Thyroid gland (tissue), 4 donors: ENCODE measurements at regions of chr11 and their contacts with region 1.

Region 1: DNA sequence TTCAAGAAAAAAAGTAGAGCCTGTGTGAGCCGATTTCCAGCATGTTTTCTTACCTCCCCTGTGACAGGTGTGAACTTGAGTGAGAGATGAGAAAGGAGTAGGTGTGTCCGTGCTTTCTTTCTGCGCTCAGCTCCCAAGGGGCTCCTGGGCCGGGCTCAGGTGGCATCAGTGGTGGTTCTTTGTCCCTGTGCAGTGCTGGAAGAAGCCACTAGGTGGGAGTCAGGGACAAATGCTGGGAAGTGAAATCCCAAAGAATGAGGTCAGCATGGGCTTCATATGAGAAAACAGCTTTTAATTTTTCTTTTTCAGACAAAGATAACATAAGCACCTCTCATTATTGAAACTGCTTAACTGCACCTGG is 57.8 kb downstream of the PPFIBP2 start:
- DNase-seq: peak; percentile 89
- H3K4me3 ChIP-seq: no peak overlapping the region
- H3K27ac ChIP-seq: peak overlapping the region; percentile 91 to 97 (median 92)
- H3K4me1 ChIP-seq: peaks cover 40 to 64% of the 10 kb centered on the region in 2 donors
- H3K27me3 ChIP-seq: no peaks in the 10 kb centered on the region
- CTCF ChIP-seq: peak; percentile 91 to 98 (median 95)
- POLR2A ChIP-seq: no peak

Region 2: DNA sequence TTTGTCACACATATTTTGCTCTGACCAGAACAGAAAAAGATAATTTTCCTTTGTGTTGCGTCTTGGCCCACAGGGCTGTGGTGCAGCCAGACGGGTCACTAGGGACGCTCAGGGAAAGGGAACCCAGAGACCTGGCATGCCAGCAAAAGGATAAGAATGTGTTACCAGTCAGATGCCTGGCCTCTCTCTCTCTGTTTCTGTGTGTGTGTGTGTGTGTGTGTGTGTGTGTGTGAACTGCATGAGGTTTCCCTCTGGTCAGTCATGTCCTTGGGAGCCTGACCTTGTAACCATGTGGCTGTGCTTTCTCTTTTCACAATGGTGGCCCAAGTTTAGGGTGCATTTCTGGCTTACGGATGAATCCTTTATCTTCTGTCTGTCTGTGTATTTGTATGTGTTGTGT is 1286.6 kb before region 1 on chr11:
- intact Hi-C with region 1: no loop called
- DNase-seq: no peak
- H3K4me3 ChIP-seq: no peak overlapping the region
- H3K27ac ChIP-seq: no peak overlapping the region
- H3K4me1 ChIP-seq: no peaks in the 10 kb centered on the region
- H3K27me3 ChIP-seq: no peaks in the 10 kb centered on the region
- CTCF ChIP-seq: no peak
- POLR2A ChIP-seq: no peak

Region 3: DNA sequence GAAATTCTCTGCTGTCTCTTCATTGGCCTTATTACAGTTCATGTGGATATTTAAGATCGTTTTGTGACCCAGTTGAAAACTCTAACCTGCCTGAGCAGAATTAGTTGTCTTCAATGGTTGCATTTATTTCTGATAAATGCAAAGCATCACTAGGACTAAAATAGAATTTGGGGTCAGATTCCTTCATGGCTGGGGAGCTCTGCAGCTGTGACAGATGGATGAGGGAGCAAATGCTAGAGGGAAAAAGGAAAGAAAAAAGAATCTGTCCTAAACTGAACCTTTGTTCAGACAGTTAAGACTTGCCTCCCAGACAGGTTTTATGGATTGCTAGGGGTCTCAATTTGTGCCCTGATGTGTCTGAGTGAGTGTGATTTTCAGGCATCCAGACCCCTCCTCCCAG is 207.0 kb before region 1 on chr11:
- intact Hi-C with region 1: no loop called
- DNase-seq: no peak
- H3K4me3 ChIP-seq: no peak overlapping the region
- H3K27ac ChIP-seq: no peak overlapping the region
- H3K4me1 ChIP-seq: no peaks in the 10 kb centered on the region
- H3K27me3 ChIP-seq: no peaks in the 10 kb centered on the region
- CTCF ChIP-seq: no peak
- POLR2A ChIP-seq: no peak

Region 4: DNA sequence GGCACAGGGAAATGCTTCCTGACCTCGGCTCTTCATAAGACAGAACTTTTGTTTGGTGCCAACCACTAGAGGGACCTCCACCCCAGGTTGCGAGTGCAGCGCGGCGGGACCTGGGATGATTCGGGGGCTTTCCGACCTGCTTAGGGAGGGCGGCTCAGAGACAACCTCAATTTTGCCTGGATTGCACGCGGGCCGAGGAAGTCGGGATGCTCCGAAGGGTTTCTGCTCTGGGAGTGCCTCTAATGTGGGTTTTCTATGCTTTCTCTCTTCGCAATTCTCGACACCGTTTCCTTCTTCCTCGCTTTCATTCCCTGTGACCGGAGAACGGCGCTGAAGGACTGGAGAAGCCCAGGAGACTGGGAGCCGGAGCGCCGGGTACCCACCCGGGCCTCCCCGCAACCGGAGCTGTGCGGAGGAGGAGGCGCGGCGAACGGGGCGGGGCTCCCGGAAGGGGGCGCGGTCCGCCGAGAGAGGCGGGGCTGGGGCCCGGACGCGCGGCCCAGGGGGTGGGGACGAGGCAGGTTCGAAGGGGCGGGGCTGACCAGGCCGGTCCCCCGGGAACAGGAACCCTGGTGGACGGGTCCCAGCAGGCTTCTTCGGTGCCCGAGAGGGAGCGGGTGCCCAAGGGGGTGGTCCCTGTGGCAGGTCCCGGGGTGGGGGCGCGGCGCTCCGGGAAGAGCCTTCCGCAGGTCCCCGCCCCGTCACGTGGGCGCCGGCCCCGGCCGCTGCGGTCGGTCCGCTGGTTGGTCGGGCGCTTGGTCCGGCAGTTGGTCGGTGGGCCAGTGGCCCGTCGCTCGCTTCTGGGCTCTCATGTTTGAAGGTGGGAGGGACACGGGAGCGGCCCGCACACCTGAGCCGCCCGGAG is 58.2 kb before region 1 on chr11 and contains the start of gene PPFIBP2:
- intact Hi-C with region 1: loop called (anchors 10 kb)
- DNase-seq: peak; percentile 93 to 96
- H3K4me3 ChIP-seq: peak within 1 kb of the TSS; percentile 31 to 93 (median 82)
- H3K27ac ChIP-seq: peak within 1 kb of the TSS; percentile 97 to 100 (median 98)
- H3K4me1 ChIP-seq: peaks cover 34 to 37% of the 10 kb centered on the region in 2 donors
- H3K27me3 ChIP-seq: no peaks in the 10 kb centered on the region
- CTCF ChIP-seq: peak in 5 of 6 experiments; percentile 55 to 78 (median 65)
- POLR2A ChIP-seq: peak; percentile 59 to 95
- total RNA-seq, gene PPFIBP2: 64.3 to 91.9 (median 71.6) TPM

Region 5: DNA sequence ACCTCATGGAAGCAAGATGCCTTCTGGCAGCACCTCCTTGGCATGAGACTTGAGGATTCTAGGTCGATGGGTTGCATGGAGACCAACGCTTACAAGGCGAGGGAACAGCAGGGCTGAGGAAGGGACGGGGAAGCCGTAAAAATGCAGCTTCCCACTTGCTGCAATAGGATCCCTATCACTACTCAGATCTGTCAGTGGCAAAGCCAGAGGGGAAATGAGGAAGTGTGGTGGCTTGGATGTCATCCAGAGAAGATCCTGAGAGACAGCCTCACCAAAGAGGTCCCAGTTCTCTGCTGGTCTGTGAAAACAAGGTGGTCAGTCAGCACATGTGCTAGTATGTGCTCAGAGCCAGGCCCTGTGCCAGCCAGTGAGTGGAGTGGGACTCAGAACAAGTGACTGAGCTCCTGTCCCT is 79.5 kb after region 1 on chr11:
- intact Hi-C with region 1: loop called (anchors 5 kb)
- DNase-seq: no peak
- H3K4me3 ChIP-seq: no peak overlapping the region
- H3K27ac ChIP-seq: no peak overlapping the region
- H3K4me1 ChIP-seq: no peaks in the 10 kb centered on the region
- H3K27me3 ChIP-seq: no peaks in the 10 kb centered on the region
- CTCF ChIP-seq: no peak
- POLR2A ChIP-seq: no peak

Region 6: GRCh38 chr11:7665473-7666291 is 94.1 kb after region 1 on chr11:
- intact Hi-C with region 1: loop called (anchors 5 kb)
- DNase-seq: peak; percentile 84 to 87
- H3K4me3 ChIP-seq: no peak overlapping the region
- H3K27ac ChIP-seq: peak overlapping the region in 1 of 3 donors; percentile 61
- H3K4me1 ChIP-seq: peaks cover 6% of the 10 kb centered on the region in 2 donors
- H3K27me3 ChIP-seq: no peaks in the 10 kb centered on the region
- CTCF ChIP-seq: peak; percentile 68 to 94 (median 84)
- POLR2A ChIP-seq: no peak